ENCODE measurements at regions of chr13 and their contacts with region 1.

Region 1: DNA sequence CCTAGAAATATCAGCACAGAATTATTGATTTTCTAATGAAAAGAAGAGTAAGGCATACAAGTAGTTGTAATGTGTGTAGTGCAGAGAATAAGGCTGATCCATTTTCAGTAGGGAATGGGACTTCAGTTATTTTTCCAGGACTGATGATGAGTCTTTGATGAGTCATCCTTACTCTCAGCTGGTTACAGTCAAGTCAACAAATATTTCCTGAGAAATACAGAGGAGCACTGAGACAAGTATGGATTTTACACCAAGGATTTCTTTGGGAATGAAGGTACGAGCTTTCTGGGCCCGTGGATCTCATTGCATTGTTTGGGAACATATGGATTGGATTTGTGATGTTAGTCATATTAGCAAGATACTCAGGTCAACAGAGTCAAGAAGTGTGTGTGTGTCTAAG is 502.7 kb downstream of the FGF9 start:
- DNase-seq: no peak
- ATAC-seq: peak in 1 of 8 donors; percentile 31
- H3K4me3 ChIP-seq: no peak overlapping the region
- H3K27ac ChIP-seq: no peak overlapping the region
- H3K4me1 ChIP-seq: no peaks in the 10 kb centered on the region
- H3K27me3 ChIP-seq: no peaks in the 10 kb centered on the region
- CTCF ChIP-seq: no peak

Region 2: DNA sequence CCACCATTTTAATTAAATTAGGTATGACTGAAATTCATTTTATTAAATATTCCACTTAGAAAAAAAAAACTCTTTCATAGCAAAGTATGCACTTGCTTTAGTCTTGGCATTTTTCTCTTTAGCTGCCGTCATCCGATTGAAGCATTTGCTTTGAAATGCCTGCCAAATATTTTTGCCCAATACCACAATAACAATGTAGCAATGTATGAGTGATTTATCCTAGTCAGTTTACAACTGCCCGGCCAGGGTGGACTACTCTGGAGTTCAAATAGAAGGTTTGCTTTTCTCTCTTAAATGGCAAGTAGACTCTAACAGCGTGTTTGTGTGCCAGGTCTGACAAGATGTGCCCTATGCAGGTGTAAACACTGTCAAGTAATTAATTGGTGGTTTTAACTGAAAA is 331.9 kb after region 1 on chr13:
- intact Hi-C with region 1: no loop called
- DNase-seq: no peak
- ATAC-seq: no peak
- H3K4me3 ChIP-seq: no peak overlapping the region
- H3K27ac ChIP-seq: no peak overlapping the region
- H3K4me1 ChIP-seq: no peaks in the 10 kb centered on the region
- H3K27me3 ChIP-seq: no peaks in the 10 kb centered on the region
- CTCF ChIP-seq: no peak

Region 3: DNA sequence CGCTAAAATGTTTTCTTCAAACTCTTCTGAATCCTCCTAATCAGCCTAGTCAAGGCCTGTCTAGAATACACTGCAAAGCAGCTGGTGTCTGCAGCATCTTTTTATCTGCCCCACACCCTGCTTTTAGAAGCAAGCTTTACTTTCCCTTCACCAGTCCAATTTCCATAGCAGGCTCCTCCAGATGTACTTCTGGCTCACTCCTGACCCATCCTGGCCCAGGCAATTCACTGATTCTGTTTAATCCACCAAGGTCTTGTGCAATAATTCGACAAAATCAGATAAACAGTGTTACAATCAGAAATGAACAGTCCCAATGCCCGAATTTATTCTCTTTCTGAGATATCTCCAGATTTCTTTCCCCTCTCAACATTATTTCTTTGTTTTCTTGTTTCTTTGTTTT is 591.9 kb after region 1 on chr13:
- intact Hi-C with region 1: loop called in 1 of 10 experiments (anchors 10 kb)
- DNase-seq: no peak
- ATAC-seq: peak in 1 of 8 donors; percentile 11
- H3K4me3 ChIP-seq: no peak overlapping the region
- H3K27ac ChIP-seq: no peak overlapping the region
- H3K4me1 ChIP-seq: no peaks in the 10 kb centered on the region
- H3K27me3 ChIP-seq: no peaks in the 10 kb centered on the region
- CTCF ChIP-seq: no peak